Activated CD4-positive, alpha-beta memory T cell treated with anti-CD3 and anti-CD28 coated beads for 36 hours (primary cell): ENCODE measurements at regions of chr9 and their contacts with region 1.

Region 1: DNA sequence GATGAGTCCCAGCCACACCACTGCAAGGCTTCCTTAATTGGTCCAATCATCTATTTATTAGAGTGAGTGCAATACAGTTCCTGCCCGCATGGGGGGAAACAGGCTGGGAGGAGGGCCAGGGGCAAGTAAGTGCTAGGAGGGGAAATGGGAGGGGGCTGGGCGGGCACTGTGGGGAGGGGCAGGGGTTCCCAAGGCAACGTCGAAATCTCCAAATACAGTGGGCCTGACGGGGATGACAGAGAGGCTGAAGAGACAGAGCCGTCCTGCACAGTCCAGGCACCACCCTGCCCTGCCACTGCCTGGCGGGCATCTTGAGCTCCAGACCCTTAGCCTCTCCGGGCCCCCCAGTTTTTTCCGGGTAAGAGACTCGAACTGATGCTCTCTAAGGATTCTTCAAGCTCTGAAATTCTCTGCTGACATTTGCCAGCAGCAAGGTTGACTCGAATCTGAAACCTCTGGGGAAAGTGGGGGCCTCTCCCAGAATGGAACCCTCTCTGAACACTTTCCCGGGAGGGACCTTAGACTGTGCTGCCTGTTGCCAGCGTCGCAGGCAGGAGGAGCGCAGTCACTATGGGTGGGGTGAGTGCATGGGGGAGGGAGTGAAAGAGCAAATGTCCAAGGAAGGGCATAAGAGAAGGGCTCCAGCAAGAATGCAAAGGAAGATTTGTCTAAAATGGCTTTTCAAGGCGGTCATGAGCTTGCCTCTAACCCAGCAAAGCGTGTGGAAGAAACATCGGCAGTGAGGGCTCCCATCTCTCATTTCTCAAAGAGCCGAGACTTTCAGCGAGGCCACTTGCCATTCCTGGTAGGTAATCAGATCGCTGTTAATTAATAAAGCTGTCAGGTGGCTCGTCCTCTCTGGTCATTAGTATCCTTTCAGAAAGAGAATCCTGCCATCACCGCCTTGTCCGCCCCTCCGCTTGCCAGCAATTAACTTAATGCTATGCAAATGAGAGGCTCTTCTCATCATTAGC is 99.0 kb downstream of the GTF3C4 start:
- DNase-seq: peak; percentile 80
- H3K4me3 Mint-ChIP-seq: peak overlapping the region; percentile 80
- H3K27ac Mint-ChIP-seq: peak overlapping the region; percentile 80
- H3K4me1 Mint-ChIP-seq: peaks cover 18% of the 10 kb centered on the region
- H3K27me3 Mint-ChIP-seq: no peaks in the 10 kb centered on the region

Region 2: DNA sequence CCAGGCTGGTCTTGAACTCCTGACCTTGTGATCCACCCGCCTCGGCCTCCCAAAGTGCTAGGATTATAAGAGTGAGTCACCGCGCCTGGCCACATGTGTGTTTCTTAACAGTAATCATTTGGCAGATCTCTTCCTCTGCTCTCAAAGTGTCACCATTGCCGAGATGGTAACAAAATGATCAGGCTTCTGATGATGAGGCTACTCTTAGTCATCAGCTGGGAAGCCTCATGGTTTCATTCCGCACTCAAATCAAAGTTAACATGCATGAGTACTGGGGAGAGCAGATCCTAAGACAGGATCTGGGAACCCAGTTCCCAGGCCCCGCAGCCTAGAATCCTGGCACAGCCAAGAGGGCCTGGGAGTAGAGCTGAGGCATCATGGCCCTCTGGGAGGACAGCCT is 159.4 kb before region 1 on chr9:
- CTCF ChIA-PET with region 1: no interaction called
- POLR2A ChIA-PET with region 1: no interaction called
- intact Hi-C with region 1: no loop called
- DNase-seq: no peak
- H3K4me3 Mint-ChIP-seq: no peak overlapping the region
- H3K27ac Mint-ChIP-seq: no peak overlapping the region
- H3K4me1 Mint-ChIP-seq: no peaks in the 10 kb centered on the region
- H3K27me3 Mint-ChIP-seq: no peaks in the 10 kb centered on the region

Region 3: GRCh38 chr9:132669698-132670456 is 99.3 kb before region 1 on chr9 and contains the start of gene DDX31:
- CTCF ChIA-PET with region 1: interaction called, 3 read pairs
- POLR2A ChIA-PET with region 1: interaction called, 8 read pairs
- intact Hi-C with region 1: loop called (anchors 2 kb)
- DNase-seq: peak; percentile 89
- H3K4me3 Mint-ChIP-seq: peak within 1 kb of the TSS; percentile 86
- H3K27ac Mint-ChIP-seq: peak within 1 kb of the TSS; percentile 87
- H3K4me1 Mint-ChIP-seq: peaks cover 44% of the 10 kb centered on the region
- H3K27me3 Mint-ChIP-seq: no peaks in the 10 kb centered on the region
- total RNA-seq, gene DDX31: 17.2 to 18.8 TPM

Region 4: GRCh38 chr9:132694157-132694556 is 75.1 kb before region 1 on chr9:
- CTCF ChIA-PET with region 1: interaction called, 11 read pairs
- POLR2A ChIA-PET with region 1: no interaction called
- intact Hi-C with region 1: no loop called
- DNase-seq: no peak
- H3K4me3 Mint-ChIP-seq: no peak overlapping the region
- H3K27ac Mint-ChIP-seq: no peak overlapping the region
- H3K4me1 Mint-ChIP-seq: no peaks in the 10 kb centered on the region
- H3K27me3 Mint-ChIP-seq: no peaks in the 10 kb centered on the region

Region 5: DNA sequence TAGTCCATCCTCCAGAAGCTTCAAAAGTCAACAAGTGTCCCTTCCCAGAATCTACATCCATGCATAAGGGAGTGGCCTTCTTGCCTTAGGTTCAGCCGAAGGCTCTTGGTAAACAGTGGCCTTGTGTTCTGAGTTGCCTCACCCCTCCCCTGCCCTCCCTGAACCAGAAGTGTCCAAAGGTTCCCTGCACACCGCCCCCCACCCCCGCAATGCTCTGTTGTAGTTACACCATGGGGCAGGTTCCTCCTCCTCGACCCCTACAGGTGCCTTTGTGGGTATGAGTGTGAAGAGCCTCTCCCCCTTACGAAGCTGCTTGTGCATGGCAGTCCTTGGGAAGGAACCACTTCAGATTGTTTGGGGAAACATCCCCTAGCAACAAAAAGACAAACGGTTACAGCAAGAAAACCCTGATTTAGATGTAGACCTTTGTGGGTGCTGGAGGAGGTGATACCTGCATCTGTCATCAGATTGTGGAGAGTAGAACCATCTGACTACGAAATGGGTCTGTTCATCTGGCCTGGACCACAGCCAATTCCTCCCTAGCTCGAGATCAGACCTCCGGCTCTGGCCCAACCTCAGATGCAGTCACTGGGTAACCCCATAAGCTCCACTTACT is 116.6 kb after region 1 on chr9:
- CTCF ChIA-PET with region 1: no interaction called
- POLR2A ChIA-PET with region 1: no interaction called
- intact Hi-C with region 1: no loop called
- DNase-seq: no peak
- H3K4me3 Mint-ChIP-seq: no peak overlapping the region
- H3K27ac Mint-ChIP-seq: no peak overlapping the region
- H3K4me1 Mint-ChIP-seq: peaks cover 3% of the 10 kb centered on the region
- H3K27me3 Mint-ChIP-seq: no peaks in the 10 kb centered on the region

Region 6: GRCh38 chr9:132944302-132945185 is 175.3 kb after region 1 on chr9 and contains the start of gene TSC1:
- CTCF ChIA-PET with region 1: no interaction called
- POLR2A ChIA-PET with region 1: interaction called, 4 read pairs
- intact Hi-C with region 1: loop called (anchors 1 kb)
- DNase-seq: peak; percentile 98
- H3K4me3 Mint-ChIP-seq: peak within 1 kb of the TSS; percentile 84
- H3K27ac Mint-ChIP-seq: peak within 1 kb of the TSS; percentile 95
- H3K4me1 Mint-ChIP-seq: peaks cover 26% of the 10 kb centered on the region
- H3K27me3 Mint-ChIP-seq: no peaks in the 10 kb centered on the region
- total RNA-seq, gene TSC1: 19.6 to 23.6 TPM